ENCODE measurements at regions of chr9 and their contacts with region 1.

Region 1: GRCh38 chr9:35116898-35117551 is 1.4 kb upstream of the ATOSB start:
- DNase-seq: peak; percentile 90 to 91
- H3K4me3 ChIP-seq: peak overlapping the region; percentile 92
- H3K4me3 Mint-ChIP-seq: peak overlapping the region; percentile 91
- H3K27ac Mint-ChIP-seq: peak overlapping the region; percentile 68
- H3K4me1 ChIP-seq: peaks cover 21% of the 10 kb centered on the region
- H3K4me1 Mint-ChIP-seq: peaks cover 17% of the 10 kb centered on the region
- H3K27me3 ChIP-seq: no peaks in the 10 kb centered on the region
- H3K27me3 Mint-ChIP-seq: no peaks in the 10 kb centered on the region
- CTCF ChIP-seq: peak; percentile 90

Region 2: GRCh38 chr9:35161713-35162604 is 44.9 kb after region 1 on chr9 and contains the start of gene UNC13B:
- CTCF ChIA-PET with region 1: interaction called, 10 read pairs
- POLR2A ChIA-PET with region 1: interaction called, 11 read pairs
- intact Hi-C with region 1: loop called (anchors 1 kb)
- DNase-seq: peak; percentile 95 to 97
- H3K4me3 ChIP-seq: peak within 1 kb of the TSS; percentile 78
- H3K4me3 Mint-ChIP-seq: peak within 1 kb of the TSS; percentile 80
- H3K27ac Mint-ChIP-seq: peak within 1 kb of the TSS; percentile 79
- H3K4me1 ChIP-seq: peaks cover 10% of the 10 kb centered on the region
- H3K4me1 Mint-ChIP-seq: no peaks in the 10 kb centered on the region
- H3K27me3 ChIP-seq: no peaks in the 10 kb centered on the region
- H3K27me3 Mint-ChIP-seq: no peaks in the 10 kb centered on the region
- CTCF ChIP-seq: peak in 1 of 2 experiments; percentile 16
- total RNA-seq, gene UNC13B: 19.7 and 20.8 TPM in 2 replicates

Region 3: DNA sequence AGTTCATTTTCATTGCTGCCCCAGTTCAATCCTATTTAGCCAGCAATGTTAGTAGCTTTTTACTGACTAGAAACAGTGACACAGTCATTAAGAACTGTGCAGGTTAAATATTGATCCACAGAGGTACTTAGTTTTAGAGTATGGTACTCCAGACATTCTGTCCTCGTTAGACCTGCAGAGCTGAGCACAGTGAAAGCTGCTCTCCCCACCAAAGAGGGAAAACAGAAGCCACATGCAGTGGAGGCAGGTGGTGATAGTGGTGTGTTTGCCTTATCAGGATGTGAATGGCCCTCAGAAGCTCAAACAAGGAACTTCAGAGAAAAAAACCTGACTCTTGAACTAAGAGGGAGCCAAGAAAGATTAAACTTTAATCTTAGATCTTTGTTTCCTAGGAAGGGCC is 120.3 kb after region 1 on chr9:
- CTCF ChIA-PET with region 1: no interaction called
- POLR2A ChIA-PET with region 1: no interaction called
- intact Hi-C with region 1: no loop called
- DNase-seq: peak; percentile 51 to 76
- H3K4me3 ChIP-seq: no peak overlapping the region
- H3K4me3 Mint-ChIP-seq: peak overlapping the region; percentile 53
- H3K27ac Mint-ChIP-seq: peak overlapping the region; percentile 45
- H3K4me1 ChIP-seq: peaks cover 21% of the 10 kb centered on the region
- H3K4me1 Mint-ChIP-seq: peaks cover 7% of the 10 kb centered on the region
- H3K27me3 ChIP-seq: no peaks in the 10 kb centered on the region
- H3K27me3 Mint-ChIP-seq: no peaks in the 10 kb centered on the region
- CTCF ChIP-seq: no peak

Region 4: DNA sequence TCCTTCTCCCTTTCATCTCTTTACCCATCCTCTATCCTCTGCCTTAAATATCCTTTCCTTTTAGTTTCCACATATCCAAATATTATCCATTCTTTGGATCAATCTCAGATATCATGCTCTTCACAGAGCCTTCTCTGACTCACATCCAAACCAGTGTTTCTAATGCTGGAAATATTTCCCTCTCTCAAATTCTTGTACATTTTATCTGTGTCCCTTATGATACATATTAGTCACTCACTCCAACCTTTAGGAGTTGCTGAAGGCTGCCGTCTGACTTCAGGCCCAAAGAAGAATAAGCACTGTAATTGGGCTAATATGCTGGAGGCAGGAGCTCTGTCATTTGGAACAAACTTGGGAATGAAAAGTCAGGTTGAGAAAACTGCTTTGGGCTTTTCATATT is 216.5 kb after region 1 on chr9:
- CTCF ChIA-PET with region 1: no interaction called
- POLR2A ChIA-PET with region 1: no interaction called
- intact Hi-C with region 1: no loop called
- DNase-seq: no peak
- H3K4me3 ChIP-seq: no peak overlapping the region
- H3K4me3 Mint-ChIP-seq: no peak overlapping the region
- H3K27ac Mint-ChIP-seq: no peak overlapping the region
- H3K4me1 ChIP-seq: no peaks in the 10 kb centered on the region
- H3K4me1 Mint-ChIP-seq: no peaks in the 10 kb centered on the region
- H3K27me3 ChIP-seq: no peaks in the 10 kb centered on the region
- H3K27me3 Mint-ChIP-seq: no peaks in the 10 kb centered on the region
- CTCF ChIP-seq: no peak

Region 5: DNA sequence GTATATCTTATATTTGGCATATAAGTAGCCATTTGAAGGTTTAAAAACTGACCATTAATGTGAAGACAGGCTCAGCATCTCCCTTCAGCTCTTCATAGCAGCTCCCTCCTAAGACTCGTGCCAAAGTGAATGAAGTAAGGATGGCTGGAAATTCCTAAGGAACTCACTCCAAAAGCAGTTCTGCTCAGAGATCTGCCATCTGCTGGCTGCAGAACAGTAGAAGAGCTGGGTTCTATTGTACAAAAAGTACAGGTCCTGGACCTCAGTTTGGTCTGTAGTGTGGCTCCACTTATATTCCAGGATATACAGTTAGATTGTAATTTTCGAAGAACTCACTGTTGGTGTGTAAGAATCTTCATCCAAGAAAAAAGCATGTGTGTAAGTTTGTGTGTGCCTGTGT is 268.0 kb after region 1 on chr9:
- CTCF ChIA-PET with region 1: no interaction called
- POLR2A ChIA-PET with region 1: no interaction called
- intact Hi-C with region 1: loop called (anchors 2 kb)
- DNase-seq: no peak
- H3K4me3 ChIP-seq: no peak overlapping the region
- H3K4me3 Mint-ChIP-seq: no peak overlapping the region
- H3K27ac Mint-ChIP-seq: no peak overlapping the region
- H3K4me1 ChIP-seq: no peaks in the 10 kb centered on the region
- H3K4me1 Mint-ChIP-seq: no peaks in the 10 kb centered on the region
- H3K27me3 ChIP-seq: no peaks in the 10 kb centered on the region
- H3K27me3 Mint-ChIP-seq: no peaks in the 10 kb centered on the region
- CTCF ChIP-seq: no peak

Region 6: DNA sequence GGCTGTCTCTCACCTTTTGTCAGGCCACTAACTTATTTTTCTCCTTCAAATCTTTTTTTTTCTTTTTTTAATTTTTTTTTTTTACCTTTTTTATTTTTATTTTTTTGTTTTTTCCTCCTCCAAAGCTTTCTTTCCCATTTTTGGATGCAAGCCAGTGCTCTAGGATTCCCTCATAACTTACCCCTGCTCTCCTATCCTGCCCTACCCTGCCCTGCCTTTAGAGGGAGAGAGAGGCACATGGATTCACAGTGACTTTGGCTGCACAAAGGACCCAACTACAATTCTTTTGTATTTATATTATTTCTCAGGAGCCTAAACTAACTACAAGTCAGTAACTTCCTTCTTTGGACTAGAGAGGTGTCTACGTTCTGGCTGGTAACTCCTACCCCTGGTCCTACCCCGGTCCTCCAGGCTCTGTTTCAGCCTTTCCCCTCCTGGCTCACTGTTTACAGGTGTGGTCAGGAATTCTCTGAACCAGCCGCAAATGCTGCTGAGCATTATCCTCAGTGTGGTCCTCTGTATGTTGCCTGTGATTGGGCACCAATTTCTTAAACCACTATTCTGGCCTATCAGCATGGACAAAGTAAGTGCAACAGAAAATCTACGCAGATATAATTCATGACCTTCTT is 364.4 kb after region 1 on chr9:
- CTCF ChIA-PET with region 1: interaction called, 5 read pairs
- POLR2A ChIA-PET with region 1: no interaction called
- intact Hi-C with region 1: loop called (anchors 1 kb)
- DNase-seq: peak; percentile 55 to 62
- H3K4me3 ChIP-seq: no peak overlapping the region
- H3K4me3 Mint-ChIP-seq: no peak overlapping the region
- H3K27ac Mint-ChIP-seq: no peak overlapping the region
- H3K4me1 ChIP-seq: peaks cover 4% of the 10 kb centered on the region; the same call in 1 of the 2 replicates
- H3K4me1 Mint-ChIP-seq: peaks cover 4% of the 10 kb centered on the region
- H3K27me3 ChIP-seq: no peaks in the 10 kb centered on the region
- H3K27me3 Mint-ChIP-seq: no peaks in the 10 kb centered on the region
- CTCF ChIP-seq: peak; percentile 41 to 86

Measured in Caco-2 (cell line).